Activated B cell treated with CpG ODN at 0.5 μM for 24 hours (primary cell): ENCODE measurements at regions of chr19 and their contacts with region 1.

Region 1: GRCh38 chr19:12983542-12984142 is 11.6 kb upstream of the NFIX start:
- DNase-seq: peak; percentile 94
- ATAC-seq: peak; percentile 78
- H3K4me3 Mint-ChIP-seq: no peak overlapping the region
- H3K27ac Mint-ChIP-seq: no peak overlapping the region
- H3K4me1 Mint-ChIP-seq: peaks cover 5% of the 10 kb centered on the region
- H3K27me3 Mint-ChIP-seq: peaks cover 3% of the 10 kb centered on the region
- CTCF ChIP-seq: peak; percentile 65

Region 2: DNA sequence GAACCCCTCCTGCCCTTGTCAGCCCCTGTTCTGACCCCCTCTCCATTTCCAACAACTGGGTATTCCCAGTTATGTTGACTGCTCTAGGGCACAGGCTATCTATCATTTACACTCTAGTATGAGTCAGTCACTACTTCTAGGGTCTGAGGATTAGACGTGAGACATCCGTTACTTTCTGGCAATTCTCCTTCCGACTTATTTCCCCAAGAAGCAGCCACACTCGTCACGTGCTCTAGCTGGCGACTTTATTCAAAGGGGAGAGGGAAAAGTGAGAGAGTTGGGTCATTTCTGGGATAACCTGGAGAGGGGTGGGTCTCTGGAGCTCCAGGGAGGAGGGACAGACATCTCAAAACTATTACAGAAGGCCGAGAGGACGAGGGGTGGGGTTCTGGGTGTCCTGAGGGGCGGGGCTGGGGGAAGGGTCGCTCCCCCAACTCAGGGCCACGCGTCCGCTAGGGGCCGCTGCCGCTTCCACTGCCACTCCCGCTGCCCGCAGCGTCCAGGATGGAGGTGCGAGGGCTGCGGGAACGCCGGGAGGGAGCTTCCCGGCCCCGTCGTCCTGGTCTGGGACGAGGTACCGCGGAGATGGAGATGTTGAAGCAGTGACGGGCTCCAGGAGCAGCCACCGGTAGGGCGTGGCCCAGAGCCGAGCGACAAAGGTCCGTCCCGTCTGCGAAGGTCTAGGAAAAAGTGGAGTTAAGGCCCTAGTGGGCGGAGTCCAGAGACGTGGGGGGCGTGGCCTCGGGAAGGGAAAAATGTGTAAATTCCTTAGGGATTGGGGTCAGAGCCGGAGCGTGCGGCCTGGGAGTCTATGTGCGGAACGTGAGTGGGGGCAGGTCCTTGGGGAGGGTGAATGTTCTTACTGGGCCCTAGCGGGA is 158.1 kb before region 1 on chr19:
- CTCF ChIA-PET with region 1: no interaction called
- POLR2A ChIA-PET with region 1: no interaction called
- intact Hi-C with region 1: no loop called
- DNase-seq: no peak
- ATAC-seq: peak; percentile 37
- H3K4me3 Mint-ChIP-seq: no peak overlapping the region
- H3K27ac Mint-ChIP-seq: no peak overlapping the region
- H3K4me1 Mint-ChIP-seq: peaks cover 8% of the 10 kb centered on the region
- H3K27me3 Mint-ChIP-seq: peaks cover 47% of the 10 kb centered on the region
- CTCF ChIP-seq: no peak

Region 3: GRCh38 chr19:13033819-13034611 is 50.4 kb after region 1 on chr19:
- CTCF ChIA-PET with region 1: interaction called, 6 read pairs
- POLR2A ChIA-PET with region 1: no interaction called
- intact Hi-C with region 1: loop called (anchors 1 kb)
- DNase-seq: no peak
- ATAC-seq: peak; percentile 88
- H3K4me3 Mint-ChIP-seq: no peak overlapping the region
- H3K27ac Mint-ChIP-seq: no peak overlapping the region
- H3K4me1 Mint-ChIP-seq: no peaks in the 10 kb centered on the region
- H3K27me3 Mint-ChIP-seq: peaks cover 14% of the 10 kb centered on the region
- CTCF ChIP-seq: no peak

Region 4: DNA sequence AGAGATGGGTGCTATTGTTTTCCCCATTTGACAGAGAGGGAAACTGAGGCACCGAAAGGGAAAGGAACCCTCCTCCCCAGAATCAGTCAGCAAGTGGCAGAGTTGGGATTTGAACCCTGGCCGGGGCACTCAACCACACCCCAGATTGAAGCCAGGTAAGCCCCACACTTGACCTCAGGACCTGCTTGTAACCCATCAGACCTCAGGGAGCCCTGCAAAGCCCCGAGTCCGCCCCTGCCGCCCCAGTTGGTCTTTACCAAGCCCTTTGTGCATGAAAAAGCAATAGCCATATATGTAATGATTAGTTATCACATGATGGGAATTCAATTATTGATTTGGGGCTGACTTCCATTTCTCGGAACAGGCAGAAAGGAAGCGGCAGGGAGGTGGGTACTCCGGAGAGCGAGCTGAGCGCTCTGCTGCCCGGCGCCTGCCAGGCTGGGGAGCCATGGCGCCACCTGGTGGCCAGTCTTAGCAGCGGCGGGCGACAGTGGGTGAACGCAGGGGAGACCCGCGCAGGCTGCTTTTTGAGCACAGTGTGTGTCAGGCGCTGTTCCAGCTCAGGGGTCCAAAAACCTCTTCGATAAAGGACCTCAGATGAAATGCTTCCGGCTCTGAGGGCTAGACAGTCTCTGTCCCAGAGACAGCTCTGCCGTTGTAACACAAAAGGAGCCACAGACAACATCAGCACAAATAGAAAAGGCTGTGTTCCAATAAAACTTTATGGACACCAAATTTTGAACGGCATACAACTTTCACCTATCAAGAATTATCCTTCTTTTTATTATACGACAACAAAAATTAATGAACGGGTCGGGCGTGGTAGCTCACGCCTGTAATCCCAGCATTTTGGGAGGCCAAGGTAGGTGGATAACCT is 605.6 kb after region 1 on chr19:
- CTCF ChIA-PET with region 1: interaction called, 10 read pairs
- POLR2A ChIA-PET with region 1: no interaction called
- intact Hi-C with region 1: no loop called
- DNase-seq: peak; percentile 82
- ATAC-seq: peak; percentile 95
- H3K4me3 Mint-ChIP-seq: no peak overlapping the region
- H3K27ac Mint-ChIP-seq: no peak overlapping the region
- H3K4me1 Mint-ChIP-seq: peaks cover 4% of the 10 kb centered on the region
- H3K27me3 Mint-ChIP-seq: peaks cover 15% of the 10 kb centered on the region
- CTCF ChIP-seq: peak; percentile 43